ENCODE measurements at regions of chr18 and their contacts with region 1.

Region 1: DNA sequence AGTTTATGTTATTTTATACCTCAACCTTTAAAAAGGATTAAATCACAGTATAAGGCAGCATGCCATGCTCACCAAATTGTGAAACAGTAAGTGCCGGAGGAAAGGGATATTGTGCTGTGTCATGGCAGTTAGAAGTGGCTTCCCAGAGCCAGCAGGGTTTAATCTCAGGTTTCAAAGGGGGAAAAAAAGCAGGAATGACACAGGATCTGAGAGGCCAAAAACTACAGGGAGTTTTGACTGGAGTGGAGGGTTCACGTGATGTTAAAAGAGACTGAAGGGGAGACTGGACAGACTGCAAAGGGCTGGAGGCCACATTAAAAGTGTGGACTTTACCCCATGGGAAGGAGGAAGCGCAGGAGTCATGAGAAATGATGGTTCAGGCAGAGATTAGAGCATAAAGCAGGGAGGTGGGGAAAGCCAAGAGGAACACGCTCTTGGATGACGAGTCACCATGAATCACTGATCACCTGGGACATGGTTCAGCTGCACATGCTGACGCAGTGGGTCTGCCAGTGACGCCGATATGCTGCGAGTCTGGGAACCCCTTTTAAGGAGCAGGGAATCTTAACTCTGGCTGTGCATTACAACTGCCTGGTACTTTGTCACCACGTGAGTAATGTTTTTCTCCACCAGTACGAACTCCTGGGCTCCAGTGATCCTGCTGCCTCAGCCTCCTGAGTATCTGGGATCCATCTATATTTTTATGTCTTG is 6.1 kb downstream of the CHMP1B start:
- DNase-seq: peak; percentile 92 to 97
- ATAC-seq: peak; percentile 83 to 86
- H3K4me3 ChIP-seq: peak overlapping the region; percentile 35 to 81 (median 42)
- H3K27ac ChIP-seq: peak overlapping the region; percentile 90 to 99 (median 96)
- H3K4me1 ChIP-seq: peaks cover 33 to 60% of the 10 kb centered on the region in 2 donors
- H3K27me3 ChIP-seq: no peaks in the 10 kb centered on the region
- CTCF ChIP-seq: no peak
- POLR2A ChIP-seq: peak; percentile 81 to 88

Region 2: DNA sequence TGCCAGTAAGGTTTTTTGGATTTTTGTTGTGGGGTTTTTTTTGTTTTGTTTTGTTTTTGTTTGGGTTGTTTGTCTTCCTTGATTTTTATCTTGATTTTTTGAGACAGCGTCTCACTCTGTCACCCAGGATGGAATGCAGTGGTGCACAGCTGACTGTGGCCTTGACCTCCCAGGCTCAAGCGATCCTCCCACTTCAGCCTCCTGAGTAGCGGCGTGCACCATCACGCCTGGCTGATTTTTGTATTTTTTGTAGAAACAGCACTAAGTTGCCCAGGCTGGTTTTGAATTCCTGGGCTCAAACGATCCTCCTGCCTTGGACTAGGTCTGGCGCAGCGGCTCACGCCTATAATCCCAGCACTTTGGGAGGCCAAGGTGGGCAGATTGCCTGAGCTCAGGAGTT is 34.4 kb after region 1 on chr18:
- in situ Hi-C with region 1: no loop called
- intact Hi-C with region 1: no loop called
- DNase-seq: no peak
- ATAC-seq: no peak
- H3K4me3 ChIP-seq: no peak overlapping the region
- H3K27ac ChIP-seq: no peak overlapping the region
- H3K4me1 ChIP-seq: no peaks in the 10 kb centered on the region
- H3K27me3 ChIP-seq: no peaks in the 10 kb centered on the region
- CTCF ChIP-seq: no peak
- POLR2A ChIP-seq: no peak

Region 3: DNA sequence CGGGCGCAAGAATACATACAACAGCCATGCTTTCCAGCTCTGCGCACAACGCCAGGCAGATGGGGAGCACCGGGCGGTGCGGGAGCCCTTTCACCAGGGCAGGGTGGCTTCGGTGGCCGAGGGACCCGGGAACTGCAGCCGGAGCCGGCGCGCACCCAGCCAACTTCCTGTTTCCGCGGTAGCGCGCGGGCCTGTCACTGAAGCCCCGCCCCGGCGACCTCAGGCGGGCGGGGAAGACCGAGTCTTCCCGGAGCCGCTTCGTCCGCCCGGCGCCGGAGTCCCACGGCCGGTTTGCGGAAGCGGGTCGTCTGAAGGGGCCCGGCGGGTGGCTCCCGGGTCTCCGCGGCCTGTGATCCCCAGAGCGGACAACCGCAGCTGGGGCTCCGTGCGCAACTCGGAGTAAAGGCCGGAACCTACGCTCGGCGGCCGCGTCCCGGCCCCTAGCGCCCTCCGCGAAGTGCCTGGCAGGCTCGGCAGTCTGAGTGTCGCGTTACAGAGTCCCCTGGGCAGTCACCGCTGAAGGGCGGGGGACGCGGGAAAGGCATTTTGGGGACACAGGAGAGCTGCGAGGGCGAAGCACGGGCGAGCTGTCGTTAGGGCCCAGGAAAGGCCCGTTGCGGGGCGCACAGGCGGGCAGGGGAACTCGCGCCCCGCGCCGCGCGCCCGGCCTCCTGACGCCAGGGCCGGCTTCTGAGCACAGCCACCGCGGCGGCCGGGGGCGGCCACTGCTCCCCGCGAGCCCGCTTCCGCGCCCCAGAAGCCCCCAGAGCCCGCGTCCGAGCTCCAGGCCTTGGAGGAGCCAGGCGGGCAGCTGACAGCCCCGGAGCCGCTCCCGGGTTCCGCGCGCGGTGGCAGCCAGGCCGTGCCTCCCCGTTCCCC is 51.1 kb after region 1 on chr18 and contains the start of gene MPPE1:
- in situ Hi-C with region 1: no loop called
- intact Hi-C with region 1: loop called (anchors 5 kb)
- DNase-seq: peak; percentile 79 to 87
- ATAC-seq: peak; percentile 92 to 93
- H3K4me3 ChIP-seq: peak within 1 kb of the TSS; percentile 67 to 98 (median 80)
- H3K27ac ChIP-seq: peak within 1 kb of the TSS; percentile 92 to 100 (median 98)
- H3K4me1 ChIP-seq: peaks cover 11 to 16% of the 10 kb centered on the region in 2 donors
- H3K27me3 ChIP-seq: no peaks in the 10 kb centered on the region
- CTCF ChIP-seq: peak in 1 of 5 experiments; percentile 9
- POLR2A ChIP-seq: peak; percentile 92 to 96
- total RNA-seq, gene MPPE1: 11.0 to 33.6 (median 24.8) TPM

Region 4: GRCh38 chr18:11987527-11987926 is 130.2 kb after region 1 on chr18:
- in situ Hi-C with region 1: loop called in 1 of 4 experiments (anchors 10 kb)
- intact Hi-C with region 1: loop called (anchors 1 kb)
- DNase-seq: peak; percentile 58 to 88
- ATAC-seq: peak; percentile 76 to 83
- H3K4me3 ChIP-seq: peak overlapping the region in 2 of 4 donors; percentile 1 to 24
- H3K27ac ChIP-seq: peak overlapping the region; percentile 97 to 100 (median 99)
- H3K4me1 ChIP-seq: peaks cover 77 to 95% of the 10 kb centered on the region in 2 donors
- H3K27me3 ChIP-seq: no peaks in the 10 kb centered on the region
- CTCF ChIP-seq: no peak
- POLR2A ChIP-seq: peak in 1 of 2 donors; percentile 36

Region 5: DNA sequence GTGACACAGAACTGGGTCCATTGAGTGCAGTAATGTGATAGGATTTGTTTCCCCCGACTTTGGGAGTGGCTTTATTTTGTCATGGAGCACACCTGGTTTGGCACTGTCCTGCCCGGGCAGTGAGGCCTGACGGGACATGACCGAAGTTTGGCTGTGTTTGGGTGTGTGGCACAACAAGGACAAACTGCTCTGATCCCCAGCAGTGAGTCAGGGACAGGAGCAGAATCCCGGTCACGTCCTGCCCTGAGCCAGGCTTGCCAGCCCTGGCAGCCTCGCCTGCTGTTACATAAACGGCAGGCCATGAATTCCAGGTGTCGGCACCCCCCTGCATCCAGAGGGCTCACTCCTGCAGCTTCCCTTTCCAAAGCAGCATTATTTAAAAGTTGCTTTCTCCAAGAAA is 169.7 kb after region 1 on chr18:
- in situ Hi-C with region 1: no loop called
- intact Hi-C with region 1: loop called (anchors 5 kb)
- DNase-seq: peak; percentile 88 to 89
- ATAC-seq: peak; percentile 97
- H3K4me3 ChIP-seq: no peak overlapping the region
- H3K27ac ChIP-seq: peak overlapping the region; percentile 83 to 90 (median 87)
- H3K4me1 ChIP-seq: peaks cover 22 to 29% of the 10 kb centered on the region in 2 donors
- H3K27me3 ChIP-seq: no peaks in the 10 kb centered on the region
- CTCF ChIP-seq: no peak
- POLR2A ChIP-seq: no peak